ENCODE measurements at regions of chr16 and their contacts with region 1.

Region 1: GRCh38 chr16:82580298-82580890 is 46.4 kb upstream of the CDH13 start:
- DNase-seq: no peak
- H3K4me3 ChIP-seq: no peak overlapping the region
- H3K27ac ChIP-seq: no peak overlapping the region
- H3K4me1 ChIP-seq: no peaks in the 10 kb centered on the region
- H3K27me3 ChIP-seq: no peaks in the 10 kb centered on the region
- CTCF ChIP-seq: no peak
- EP300 ChIP-seq: no peak
- POLR2A ChIP-seq: no peak

Region 2: DNA sequence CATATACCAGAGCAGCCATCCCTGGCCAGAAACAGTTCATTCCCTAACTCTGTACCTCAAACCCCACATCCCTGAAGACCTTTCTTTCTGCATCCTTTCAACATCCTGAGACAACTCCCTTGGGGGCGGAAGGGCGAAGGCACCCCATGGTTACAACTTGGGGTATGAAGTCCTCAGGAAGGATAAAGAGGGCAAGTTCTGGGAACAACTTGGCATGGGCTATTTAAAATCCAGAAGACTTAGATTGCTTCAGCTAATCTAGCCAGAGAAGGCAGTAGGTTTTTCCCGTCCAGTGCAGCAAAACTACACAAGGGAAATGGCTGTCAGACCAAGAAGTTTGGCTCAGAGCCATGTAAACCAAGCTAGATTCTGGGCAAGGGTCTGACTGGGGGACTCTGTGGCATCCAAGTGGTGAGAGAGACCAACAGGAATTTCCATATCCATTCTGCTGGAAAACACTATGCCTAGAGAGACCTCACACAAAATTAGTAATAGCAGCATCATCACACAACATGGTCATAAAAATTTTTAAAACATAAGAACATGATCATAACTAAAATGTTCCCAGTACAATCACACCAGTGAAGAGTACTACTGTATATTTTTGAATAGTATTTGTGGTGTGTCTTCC is 1889.2 kb before region 1 on chr16:
- intact Hi-C with region 1: loop called in 1 of 4 experiments (anchors 10 kb)
- DNase-seq: no peak
- H3K4me3 ChIP-seq: no peak overlapping the region
- H3K27ac ChIP-seq: no peak overlapping the region
- H3K4me1 ChIP-seq: no peaks in the 10 kb centered on the region
- H3K27me3 ChIP-seq: no peaks in the 10 kb centered on the region
- CTCF ChIP-seq: no peak
- EP300 ChIP-seq: no peak
- POLR2A ChIP-seq: no peak

Measured in ovary (tissue), 10 donors.